Cardiac septum (tissue), 1 donor: ENCODE measurements at regions of chr1 and their contacts with region 1.

Region 1: GRCh38 chr1:110188035-110188618 is 22.0 kb upstream of the KCNC4 start:
- DNase-seq: no peak

Region 2: GRCh38 chr1:110053557-110054428 is 134.3 kb before region 1 on chr1:
- intact Hi-C with region 1: loop called (anchors 5 kb)
- DNase-seq: no peak